ENCODE measurements at regions of chr2 and their contacts with region 1.

Region 1: GRCh38 chr2:191114403-191114886 is 36.3 kb downstream of the STAT4 start:
- DNase-seq: peak; percentile 26
- H3K4me3 Mint-ChIP-seq: peak overlapping the region; percentile 69
- H3K27ac Mint-ChIP-seq: peak overlapping the region; percentile 96
- H3K4me1 Mint-ChIP-seq: peaks cover 63% of the 10 kb centered on the region
- H3K27me3 Mint-ChIP-seq: no peaks in the 10 kb centered on the region

Region 2: DNA sequence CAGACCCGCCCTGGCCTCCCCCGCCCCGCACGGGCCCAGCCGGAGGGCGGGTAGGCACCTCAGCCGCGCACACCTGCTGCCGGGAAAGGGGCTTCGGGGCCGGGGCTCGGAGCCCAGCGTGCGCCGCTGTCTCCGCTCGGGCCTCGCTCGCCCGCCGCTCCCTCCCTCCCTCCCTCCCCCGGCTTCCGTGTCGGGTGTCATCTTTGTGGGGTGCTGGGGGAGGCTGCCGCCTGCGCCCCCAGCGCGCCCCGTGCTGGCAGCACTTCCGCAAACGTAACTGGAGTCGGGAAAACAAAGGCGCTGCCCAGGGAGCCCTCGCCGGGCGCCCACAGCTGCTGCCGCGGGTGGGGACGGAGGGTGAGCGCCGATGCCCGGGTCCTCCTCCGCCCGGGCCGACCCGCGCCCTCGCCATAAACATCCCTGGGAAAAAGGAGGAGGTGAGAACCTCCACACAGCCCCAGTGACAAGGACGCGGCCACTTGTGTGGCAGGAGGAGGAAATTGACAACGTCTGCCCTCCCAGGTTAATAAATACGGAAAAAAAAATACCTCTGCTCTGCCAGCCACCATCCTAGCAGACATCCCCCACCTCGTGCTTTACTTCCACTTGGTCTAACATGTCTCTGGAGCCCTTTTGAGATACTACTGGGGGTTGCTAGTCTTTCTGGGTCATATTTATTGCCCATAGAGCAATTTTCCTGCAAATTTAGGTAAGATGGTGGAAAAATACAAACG is 705.7 kb before region 1 on chr2:
- intact Hi-C with region 1: loop called (anchors 5 kb)
- DNase-seq: peak; percentile 66
- H3K4me3 Mint-ChIP-seq: peak overlapping the region; percentile 90
- H3K27ac Mint-ChIP-seq: peak overlapping the region; percentile 94
- H3K4me1 Mint-ChIP-seq: peaks cover 44% of the 10 kb centered on the region
- H3K27me3 Mint-ChIP-seq: no peaks in the 10 kb centered on the region

Region 3: DNA sequence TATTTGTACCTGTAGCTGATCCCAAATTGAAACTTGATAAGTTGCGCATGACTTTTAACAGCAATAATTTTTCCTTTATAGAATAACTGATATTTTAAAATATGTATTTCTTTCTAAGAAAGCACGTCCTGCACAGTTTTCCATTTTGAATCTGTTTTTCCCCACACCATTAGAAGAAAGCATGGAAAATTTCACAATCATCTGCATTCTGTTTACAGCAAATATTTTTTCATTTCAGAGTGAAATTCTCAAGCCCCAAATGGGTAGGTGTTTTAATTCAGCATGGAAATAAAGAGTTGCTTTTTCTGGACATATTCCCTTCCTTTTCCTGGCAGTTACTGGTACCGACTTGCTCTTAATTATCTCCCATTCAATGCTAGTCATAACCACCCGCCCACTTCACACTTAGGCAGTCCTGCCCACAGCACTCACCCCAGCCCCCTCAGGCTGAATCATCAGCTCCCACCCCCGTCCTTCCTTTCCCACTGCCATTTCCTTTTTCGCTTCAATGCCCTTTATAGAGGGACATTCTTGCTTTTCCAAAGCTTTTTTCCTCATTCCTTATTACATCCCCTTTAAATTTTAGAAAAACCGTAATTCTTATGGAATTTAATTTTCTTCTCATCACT is 323.0 kb before region 1 on chr2:
- intact Hi-C with region 1: loop called (anchors 10 kb)
- DNase-seq: no peak
- H3K4me3 Mint-ChIP-seq: peak overlapping the region; percentile 19
- H3K27ac Mint-ChIP-seq: peak overlapping the region; percentile 74
- H3K4me1 Mint-ChIP-seq: peaks cover 76% of the 10 kb centered on the region
- H3K27me3 Mint-ChIP-seq: no peaks in the 10 kb centered on the region

Region 4: GRCh38 chr2:191020221-191020741 is 94.2 kb before region 1 on chr2:
- intact Hi-C with region 1: loop called (anchors 1 kb)
- DNase-seq: peak; percentile 96
- H3K4me3 Mint-ChIP-seq: no peak overlapping the region
- H3K27ac Mint-ChIP-seq: no peak overlapping the region
- H3K4me1 Mint-ChIP-seq: peaks cover 45% of the 10 kb centered on the region
- H3K27me3 Mint-ChIP-seq: peaks cover 2% of the 10 kb centered on the region

Region 5: GRCh38 chr2:191128172-191128910 is 13.9 kb after region 1 on chr2:
- intact Hi-C with region 1: loop called (anchors 1 kb)
- DNase-seq: no peak
- H3K4me3 Mint-ChIP-seq: peak overlapping the region; percentile 12
- H3K27ac Mint-ChIP-seq: peak overlapping the region; percentile 50
- H3K4me1 Mint-ChIP-seq: peaks cover 57% of the 10 kb centered on the region
- H3K27me3 Mint-ChIP-seq: no peaks in the 10 kb centered on the region

Region 6: DNA sequence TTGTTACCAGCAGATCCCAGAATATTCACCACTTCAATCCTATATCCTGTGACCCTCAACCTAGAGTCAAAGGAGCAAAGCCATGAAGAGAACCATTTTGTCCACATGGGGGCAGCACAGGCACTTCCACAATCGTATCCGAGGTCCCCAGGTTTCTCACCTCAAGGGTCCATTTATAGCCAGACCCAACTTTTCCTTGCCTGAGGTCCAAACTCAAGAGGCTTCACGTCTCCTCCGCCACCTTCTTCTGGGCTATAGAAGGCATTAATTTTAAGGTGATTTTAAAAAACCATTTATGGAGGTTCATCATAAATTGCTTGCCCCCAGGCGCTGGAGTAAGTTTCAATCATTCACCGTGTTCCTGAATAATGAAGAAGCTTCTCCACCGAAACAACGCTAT is 451.9 kb after region 1 on chr2:
- intact Hi-C with region 1: loop called (anchors 2 kb)
- DNase-seq: peak; percentile 25
- H3K4me3 Mint-ChIP-seq: no peak overlapping the region
- H3K27ac Mint-ChIP-seq: no peak overlapping the region
- H3K4me1 Mint-ChIP-seq: peaks cover 42% of the 10 kb centered on the region
- H3K27me3 Mint-ChIP-seq: peaks cover 51% of the 10 kb centered on the region

Measured in activated T-helper 1 cell treated with anti-CD3 and anti-CD28 coated beads, Interleukin-12 subunit alpha, Interleukin-12 subunit beta, Interleukin-2, Interleukin-4 antibody, amounts not matched to agents 30 ng/mL and 10 ng/mL and 1 ng/mL, durations not matched to agents 14 hours and 24 hours and 36 hours (primary cell).